ENCODE measurements at regions of chr17 and their contacts with region 1.

Region 1: GRCh38 chr17:40417609-40418427 is at the start of gene TOP2A:
- DNase-seq: peak; percentile 98 to 100 (median 99)
- H3K4me3 ChIP-seq: peak within 1 kb of the TSS; percentile 60 to 92 (median 82)
- H3K4me3 Mint-ChIP-seq: peak within 1 kb of the TSS; percentile 98 to 100
- H3K27ac ChIP-seq: peak within 1 kb of the TSS in 1 of 2 donors; percentile 79
- H3K27ac Mint-ChIP-seq: peak within 1 kb of the TSS; percentile 74 to 91 (median 79)
- H3K4me1 ChIP-seq: peaks cover 39 to 47% of the 10 kb centered on the region in 2 donors
- H3K4me1 Mint-ChIP-seq: peaks cover 35% of the 10 kb centered on the region
- H3K27me3 ChIP-seq: no peaks in the 10 kb centered on the region
- H3K27me3 Mint-ChIP-seq: peaks cover 0 to 2% (median 2%) of the 10 kb centered on the region in 3 donors
- CTCF ChIP-seq: no peak
- polyA plus RNA-seq, gene TOP2A: 0.01 to 0.94 (median 0.28) TPM

Region 2: DNA sequence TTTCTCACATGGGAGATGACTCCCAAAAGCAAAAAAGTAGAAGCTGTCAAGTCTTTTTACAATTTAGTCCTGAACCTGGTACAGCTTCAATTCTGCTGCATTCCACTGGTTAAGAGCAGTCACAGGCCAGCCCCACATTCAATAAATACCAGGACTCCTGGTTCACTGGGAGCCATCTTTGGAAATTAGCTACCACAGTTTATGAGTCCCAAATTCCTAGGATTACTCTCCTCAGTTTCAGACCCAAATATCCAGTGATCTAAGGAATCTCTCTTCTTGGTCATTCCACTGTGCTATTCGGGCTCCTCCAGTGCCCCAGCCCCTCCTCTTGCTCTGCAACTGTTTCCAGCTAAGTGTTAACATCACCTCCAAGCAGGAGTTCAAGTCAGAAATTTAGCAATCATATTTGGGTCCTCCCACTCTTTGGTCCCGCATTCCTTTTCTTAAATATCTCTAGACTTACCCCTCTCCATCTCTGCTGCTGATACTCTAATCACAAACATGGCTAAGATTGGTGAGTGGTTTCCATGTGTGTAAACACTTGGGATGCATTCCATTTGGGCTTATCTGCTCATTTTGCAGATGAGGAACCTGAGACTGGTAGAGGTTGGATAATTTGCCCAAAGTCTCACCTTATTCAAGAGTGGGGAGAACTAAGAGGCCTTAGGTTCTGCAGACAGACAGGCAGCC is 208.3 kb before region 1 on chr17:
- intact Hi-C with region 1: loop called in 1 of 2 experiments (anchors 10 kb)
- DNase-seq: no peak
- H3K4me3 ChIP-seq: no peak overlapping the region
- H3K4me3 Mint-ChIP-seq: no peak overlapping the region
- H3K27ac ChIP-seq: no peak overlapping the region
- H3K27ac Mint-ChIP-seq: no peak overlapping the region
- H3K4me1 ChIP-seq: no peaks in the 10 kb centered on the region
- H3K4me1 Mint-ChIP-seq: peaks cover 7% of the 10 kb centered on the region
- H3K27me3 ChIP-seq: no peaks in the 10 kb centered on the region
- H3K27me3 Mint-ChIP-seq: peaks cover 0 to 5% (median 1%) of the 10 kb centered on the region in 3 donors
- CTCF ChIP-seq: no peak

Measured in CD14-positive monocyte (primary cell).